MCF 10A (cell line): ENCODE measurements at regions of chr4 and their contacts with region 1.

Region 1: DNA sequence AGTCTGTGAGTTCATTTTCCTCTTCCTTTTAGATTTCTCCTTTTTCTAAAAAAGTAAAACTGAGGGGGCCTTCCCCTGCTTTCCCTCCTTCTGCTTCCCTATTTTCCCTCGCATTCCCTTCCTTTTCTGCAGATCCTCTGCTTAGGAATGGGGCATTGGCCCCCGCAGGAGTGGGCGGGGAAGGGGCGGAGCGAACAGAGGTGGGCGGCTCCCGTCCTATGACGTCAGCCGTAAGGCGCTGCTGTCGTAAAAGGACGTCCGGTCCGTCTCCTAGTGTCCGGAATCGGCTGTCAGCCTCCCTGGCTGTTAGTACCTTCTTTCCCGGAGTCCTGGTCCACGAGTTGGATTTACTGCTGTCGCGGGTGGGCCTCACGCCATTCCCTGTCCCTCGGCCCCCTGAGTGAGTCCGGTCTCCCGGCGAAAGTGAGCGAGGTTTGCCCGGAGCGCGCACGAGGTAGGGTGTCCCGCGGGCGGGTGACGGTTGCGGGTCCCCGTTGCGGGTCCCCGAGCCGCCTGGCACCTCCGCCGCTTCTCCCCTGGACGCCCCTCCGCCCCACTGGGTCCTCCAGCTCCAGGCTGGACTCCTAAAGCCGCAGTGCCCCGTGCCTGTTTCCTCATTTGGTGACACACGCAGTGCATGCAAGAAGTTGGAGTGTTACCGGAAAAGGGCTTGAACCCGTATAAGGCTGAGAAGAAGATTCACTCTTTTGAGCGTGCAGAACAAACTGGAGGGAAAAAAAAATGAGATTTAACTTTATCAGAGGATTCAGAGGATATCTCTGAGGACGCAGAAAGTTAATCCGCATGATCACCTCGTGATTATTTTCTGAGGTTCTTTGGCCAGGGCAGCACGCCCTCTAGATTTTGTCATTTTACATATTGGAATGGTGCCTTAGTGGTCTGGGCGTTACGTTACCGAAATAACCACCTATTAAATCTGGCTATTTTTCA is at the start of gene ZNF330:
- DNase-seq: peak; percentile 91
- H3K4me3 Mint-ChIP-seq: peak within 1 kb of the TSS; percentile 94
- H3K27ac Mint-ChIP-seq: peak within 1 kb of the TSS; percentile 96
- H3K4me1 Mint-ChIP-seq: peaks cover 21% of the 10 kb centered on the region
- H3K27me3 Mint-ChIP-seq: no peaks in the 10 kb centered on the region
- CTCF ChIP-seq: no peak
- total RNA-seq, gene ZNF330: 34.1 and 39.1 TPM in 2 replicates

Region 2: DNA sequence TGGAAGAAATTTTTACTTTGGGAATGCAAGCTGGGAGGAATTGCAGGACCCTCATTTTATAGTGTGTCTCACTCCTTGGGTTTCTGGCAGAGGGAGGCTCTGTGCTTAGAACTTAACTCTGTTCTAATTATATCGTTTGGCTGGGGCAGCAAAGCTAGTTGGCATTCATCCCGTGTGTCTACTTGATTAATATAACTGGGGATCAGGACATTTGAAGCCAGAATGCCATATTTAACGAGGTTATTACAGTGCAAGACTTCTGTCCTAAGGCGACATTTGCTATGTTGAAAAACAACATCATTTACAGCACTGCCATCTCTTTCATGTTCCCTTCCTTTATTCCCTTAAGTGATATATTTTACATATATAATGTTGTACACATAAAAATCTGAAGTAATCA is 285.7 kb before region 1 on chr4:
- CTCF ChIA-PET with region 1: no interaction called
- POLR2A ChIA-PET with region 1: no interaction called
- intact Hi-C with region 1: no loop called
- DNase-seq: no peak
- H3K4me3 Mint-ChIP-seq: no peak overlapping the region
- H3K27ac Mint-ChIP-seq: no peak overlapping the region
- H3K4me1 Mint-ChIP-seq: peaks cover 5% of the 10 kb centered on the region
- H3K27me3 Mint-ChIP-seq: no peaks in the 10 kb centered on the region
- CTCF ChIP-seq: no peak

Region 3: GRCh38 chr4:141329174-141329569 is 108.2 kb after region 1 on chr4:
- CTCF ChIA-PET with region 1: no interaction called
- POLR2A ChIA-PET with region 1: no interaction called
- intact Hi-C with region 1: loop called (anchors 1 kb)
- DNase-seq: peak; percentile 93
- H3K4me3 Mint-ChIP-seq: no peak overlapping the region
- H3K27ac Mint-ChIP-seq: peak overlapping the region; percentile 52
- H3K4me1 Mint-ChIP-seq: peaks cover 16% of the 10 kb centered on the region
- H3K27me3 Mint-ChIP-seq: no peaks in the 10 kb centered on the region
- CTCF ChIP-seq: no peak